ENCODE measurements at regions of chr14 and their contacts with region 1.

Region 1: DNA sequence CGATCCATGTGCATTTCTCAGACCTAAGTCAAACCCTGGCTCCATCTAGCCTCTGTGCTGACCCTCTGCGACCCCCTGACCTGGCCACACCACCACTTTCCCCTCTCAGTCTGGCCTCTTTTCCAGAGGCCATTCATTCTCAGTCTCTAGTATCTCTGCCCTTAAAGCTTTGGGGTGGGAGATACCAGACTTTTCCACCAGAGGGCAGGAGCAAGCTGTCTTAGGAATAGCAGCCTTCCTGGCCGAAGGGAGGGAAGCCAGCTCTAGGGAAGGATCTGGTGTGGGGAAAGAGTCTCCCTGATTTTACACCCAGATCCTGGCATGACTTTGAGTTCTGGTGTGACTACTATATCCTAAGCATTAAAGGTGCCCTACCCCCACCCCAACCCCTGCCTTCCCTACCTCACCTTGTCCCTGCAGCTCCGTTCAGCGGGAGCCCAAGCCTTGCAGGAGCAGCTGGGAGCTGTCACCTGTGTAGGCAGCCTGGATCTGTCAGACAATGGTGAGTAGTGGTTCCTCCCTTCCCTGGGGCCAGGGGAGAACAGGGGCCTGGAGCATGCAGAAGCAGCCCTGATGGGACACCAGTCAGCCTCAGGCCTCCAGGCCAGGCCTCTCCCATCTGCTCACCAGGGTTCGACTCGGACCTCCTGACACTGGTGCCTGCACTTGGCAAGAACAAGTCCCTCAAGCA is 6.6 kb downstream of the CARMIL3 start:
- DNase-seq: peak in 4 of 9 experiments; percentile 25 to 71 (median 58)
- ATAC-seq: peak; percentile 86
- H3K4me3 ChIP-seq: no peak overlapping the region
- H3K4me3 Mint-ChIP-seq: no peak overlapping the region
- H3K27ac ChIP-seq: no peak overlapping the region
- H3K27ac Mint-ChIP-seq: peak overlapping the region; percentile 53
- H3K4me1 ChIP-seq: no peaks in the 10 kb centered on the region
- H3K4me1 Mint-ChIP-seq: peaks cover 3% of the 10 kb centered on the region
- H3K27me3 ChIP-seq: no peaks in the 10 kb centered on the region
- H3K27me3 Mint-ChIP-seq: peaks cover 3% of the 10 kb centered on the region
- CTCF ChIP-seq: peak; percentile 94

Region 2: DNA sequence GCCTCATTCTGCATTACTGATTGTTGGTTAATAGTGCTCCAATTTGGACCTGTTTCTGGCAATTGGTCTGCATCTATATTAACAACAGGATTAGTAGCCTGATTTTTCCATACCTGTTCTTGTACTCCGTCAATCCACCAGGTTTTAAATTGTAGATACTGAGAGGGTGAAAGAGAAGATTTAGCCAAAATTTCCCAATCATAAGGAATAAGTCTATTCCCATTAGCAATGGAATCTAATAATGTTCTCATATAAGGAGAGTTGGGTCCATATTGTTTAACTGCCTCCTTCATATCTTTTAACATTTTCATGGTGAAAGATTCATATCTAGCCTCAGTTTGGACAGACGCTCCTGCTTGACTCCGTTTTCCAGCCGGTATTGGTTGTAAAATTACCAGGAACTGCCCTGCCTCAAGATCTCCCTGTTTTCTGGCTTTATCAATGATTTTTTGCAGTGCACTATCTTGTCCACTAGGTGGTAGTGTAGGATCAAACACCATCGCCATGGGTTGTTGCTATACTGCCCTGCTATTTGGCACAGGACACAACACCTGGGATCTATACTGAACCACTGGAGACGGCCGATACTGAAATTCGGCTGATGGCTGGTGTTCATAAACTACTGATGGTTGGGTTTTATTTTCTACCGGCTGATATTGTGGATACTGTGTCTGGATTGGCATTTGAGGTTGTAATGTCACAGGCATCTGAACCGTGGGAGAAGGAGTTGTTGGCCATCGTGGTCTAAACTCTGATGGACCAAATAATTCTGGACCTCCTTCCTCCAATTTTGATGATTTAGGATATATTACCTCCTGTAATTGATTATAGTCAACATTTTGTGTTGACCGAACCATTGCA is 44.5 kb before region 1 on chr14:
- CTCF ChIA-PET with region 1: interaction called, 6 read pairs
- POLR2A ChIA-PET with region 1: no interaction called
- intact Hi-C with region 1: loop called (anchors 1 kb)
- DNase-seq: peak in 8 of 9 experiments; percentile 14 to 84 (median 50)
- ATAC-seq: peak; percentile 99
- H3K4me3 ChIP-seq: no peak overlapping the region
- H3K4me3 Mint-ChIP-seq: no peak overlapping the region
- H3K27ac ChIP-seq: no peak overlapping the region
- H3K27ac Mint-ChIP-seq: no peak overlapping the region
- H3K4me1 ChIP-seq: peaks cover 7% of the 10 kb centered on the region
- H3K4me1 Mint-ChIP-seq: peaks cover 25% of the 10 kb centered on the region
- H3K27me3 ChIP-seq: no peaks in the 10 kb centered on the region
- H3K27me3 Mint-ChIP-seq: no peaks in the 10 kb centered on the region
- CTCF ChIP-seq: peak; percentile 93

Region 3: GRCh38 chr14:24080888-24081738 is 22.7 kb after region 1 on chr14:
- CTCF ChIA-PET with region 1: interaction called, 81 read pairs
- POLR2A ChIA-PET with region 1: interaction called, 15 read pairs
- intact Hi-C with region 1: no loop called
- DNase-seq: peak; percentile 46 to 83 (median 68)
- ATAC-seq: peak; percentile 89
- H3K4me3 ChIP-seq: peak overlapping the region; percentile 48 to 68
- H3K4me3 Mint-ChIP-seq: peak overlapping the region; percentile 87
- H3K27ac ChIP-seq: peak overlapping the region in 1 of 2 experiments; percentile 72
- H3K27ac Mint-ChIP-seq: peak overlapping the region; percentile 88
- H3K4me1 ChIP-seq: peaks cover 14% of the 10 kb centered on the region
- H3K4me1 Mint-ChIP-seq: peaks cover 21% of the 10 kb centered on the region
- H3K27me3 ChIP-seq: no peaks in the 10 kb centered on the region
- H3K27me3 Mint-ChIP-seq: no peaks in the 10 kb centered on the region
- CTCF ChIP-seq: no peak

Region 4: DNA sequence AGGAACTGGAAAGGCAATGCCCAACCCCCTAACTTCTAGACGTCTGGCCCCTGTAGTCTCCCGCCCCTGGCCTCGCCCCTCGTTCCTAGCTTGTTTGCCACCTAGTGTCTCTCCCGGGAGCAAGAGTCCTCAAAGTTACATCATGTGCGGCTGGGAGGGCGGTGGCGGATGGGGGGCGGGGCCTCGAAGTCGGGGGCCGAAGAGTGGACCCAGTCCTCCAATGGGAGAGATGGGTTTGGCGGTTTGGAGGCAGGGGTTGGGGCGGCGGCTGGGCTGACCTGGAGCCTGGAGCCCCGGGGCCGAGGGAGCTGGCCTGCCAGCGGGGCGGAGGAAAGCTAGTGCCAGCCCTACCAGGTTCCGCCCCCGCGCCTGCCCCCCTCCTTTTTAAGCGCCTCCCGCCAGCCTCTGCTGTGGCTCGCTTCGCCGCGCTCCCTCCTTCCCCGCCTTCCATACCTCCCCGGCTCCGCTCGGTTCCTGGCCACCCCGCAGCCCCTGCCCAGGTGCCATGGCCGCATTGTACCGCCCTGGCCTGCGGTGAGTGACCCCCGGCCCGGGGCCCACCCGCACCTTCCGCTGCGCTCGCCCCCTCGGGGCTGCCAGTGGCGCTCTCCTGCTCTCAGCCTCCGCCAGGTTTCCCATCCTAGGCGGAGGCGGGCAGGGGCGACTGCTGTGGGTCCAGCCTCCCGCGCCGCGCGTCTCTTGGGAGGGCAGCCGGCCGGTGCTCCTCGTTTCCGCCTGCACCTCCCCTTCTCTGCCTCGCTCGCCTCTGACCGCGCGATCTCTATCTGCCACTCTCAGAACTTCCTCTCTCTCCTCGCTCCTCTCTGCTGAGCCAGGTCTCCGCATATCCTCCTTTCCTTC is 35.7 kb after region 1 on chr14 and contains the start of gene PCK2:
- CTCF ChIA-PET with region 1: interaction called, 873 read pairs
- POLR2A ChIA-PET with region 1: interaction called, 15 read pairs
- intact Hi-C with region 1: loop called (anchors 1 kb)
- DNase-seq: peak; percentile 39 to 82 (median 68)
- ATAC-seq: peak; percentile 79
- H3K4me3 ChIP-seq: peak within 1 kb of the TSS; percentile 69 to 99
- H3K4me3 Mint-ChIP-seq: peak within 1 kb of the TSS; percentile 98
- H3K27ac ChIP-seq: peak within 1 kb of the TSS; percentile 69 to 76
- H3K27ac Mint-ChIP-seq: peak within 1 kb of the TSS; percentile 98
- H3K4me1 ChIP-seq: peaks cover 19% of the 10 kb centered on the region
- H3K4me1 Mint-ChIP-seq: peaks cover 37% of the 10 kb centered on the region
- H3K27me3 ChIP-seq: no peaks in the 10 kb centered on the region
- H3K27me3 Mint-ChIP-seq: no peaks in the 10 kb centered on the region
- CTCF ChIP-seq: no peak
- total RNA-seq, gene PCK2: 4.9 to 5.2 TPM

Region 5: GRCh38 chr14:24155100-24155499 is 96.7 kb after region 1 on chr14:
- CTCF ChIA-PET with region 1: interaction called, 44 read pairs
- POLR2A ChIA-PET with region 1: no interaction called
- intact Hi-C with region 1: no loop called
- DNase-seq: no peak
- ATAC-seq: no peak
- H3K4me3 ChIP-seq: no peak overlapping the region
- H3K4me3 Mint-ChIP-seq: no peak overlapping the region
- H3K27ac ChIP-seq: no peak overlapping the region
- H3K27ac Mint-ChIP-seq: no peak overlapping the region
- H3K4me1 ChIP-seq: peaks cover under 1% of the 10 kb centered on the region
- H3K4me1 Mint-ChIP-seq: peaks cover 5% of the 10 kb centered on the region
- H3K27me3 ChIP-seq: no peaks in the 10 kb centered on the region
- H3K27me3 Mint-ChIP-seq: no peaks in the 10 kb centered on the region
- CTCF ChIP-seq: no peak

Region 6: GRCh38 chr14:24299255-24300195 is 241.1 kb after region 1 on chr14 and contains the starts of genes DHRS1 and NOP9:
- CTCF ChIA-PET with region 1: interaction called, 4 read pairs
- POLR2A ChIA-PET with region 1: no interaction called
- intact Hi-C with region 1: loop called in 1 of 2 experiments (anchors 5 kb)
- DNase-seq: peak; percentile 82 to 98 (median 92)
- ATAC-seq: peak; percentile 78
- H3K4me3 ChIP-seq: peak within 1 kb of the TSS; percentile 80 to 83
- H3K4me3 Mint-ChIP-seq: peak within 1 kb of the TSS; percentile 94
- H3K27ac ChIP-seq: peak within 1 kb of the TSS; percentile 80 to 85
- H3K27ac Mint-ChIP-seq: peak within 1 kb of the TSS; percentile 96
- H3K4me1 ChIP-seq: peaks cover 28% of the 10 kb centered on the region
- H3K4me1 Mint-ChIP-seq: peaks cover 51% of the 10 kb centered on the region
- H3K27me3 ChIP-seq: no peaks in the 10 kb centered on the region
- H3K27me3 Mint-ChIP-seq: no peaks in the 10 kb centered on the region
- CTCF ChIP-seq: no peak
- total RNA-seq, gene DHRS1: 24.3 to 28.5 TPM
- total RNA-seq, gene NOP9: 35.6 to 35.8 TPM

Measured in CD8-positive, alpha-beta T cell (primary cell).